WTC11 (cell line): ENCODE measurements at regions of chr2 and their contacts with region 1.

Region 1: DNA sequence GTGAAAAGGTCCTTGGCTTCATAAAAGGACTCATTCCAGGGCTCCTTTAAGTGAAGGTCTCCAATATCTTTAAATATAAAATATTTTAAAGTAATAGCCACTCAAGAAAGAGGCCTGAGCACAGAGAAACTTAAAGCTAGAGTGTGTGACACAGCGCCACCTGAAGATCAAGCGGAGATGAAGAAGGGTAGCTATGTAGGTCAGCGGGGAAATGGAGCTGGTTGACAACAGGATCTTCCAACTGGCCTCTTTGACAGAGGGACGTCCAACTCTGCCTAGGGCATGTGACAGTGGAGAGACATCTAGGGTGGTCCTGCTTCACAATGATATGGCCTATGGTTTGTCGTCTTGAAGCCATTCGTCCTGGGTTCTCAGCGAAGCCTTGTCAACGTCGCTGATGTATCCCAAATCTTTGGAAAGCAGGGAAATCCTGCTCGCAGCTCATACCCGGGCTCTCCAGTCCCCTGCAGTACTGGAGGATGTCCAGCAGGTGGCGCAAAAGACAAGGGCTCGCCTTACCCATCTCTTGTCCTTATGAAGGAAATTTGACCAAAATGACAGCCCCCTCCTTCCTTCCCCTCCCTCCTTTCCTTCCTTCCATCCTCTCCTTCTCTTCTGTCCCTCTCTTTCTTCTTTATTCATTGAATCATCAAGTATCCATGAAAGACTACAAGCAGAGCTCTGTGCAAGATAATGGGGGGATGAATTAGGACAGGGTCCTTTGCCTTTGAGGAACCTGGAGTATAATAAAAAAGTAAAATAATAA is 59.6 kb downstream of the LONRF2 start:
- DNase-seq: peak; percentile 84
- ATAC-seq: peak; percentile 74
- H3K4me3 Mint-ChIP-seq: peak overlapping the region; percentile 51
- H3K27ac Mint-ChIP-seq: no peak overlapping the region
- H3K4me1 Mint-ChIP-seq: peaks cover 12% of the 10 kb centered on the region
- H3K27me3 Mint-ChIP-seq: no peaks in the 10 kb centered on the region
- CTCF ChIP-seq: peak; percentile 99

Region 2: GRCh38 chr2:99559075-99559662 is 703.6 kb before region 1 on chr2:
- CTCF ChIA-PET with region 1: interaction called, 28 read pairs
- POLR2A ChIA-PET with region 1: no interaction called
- DNase-seq: peak; percentile 92
- ATAC-seq: peak; percentile 77
- H3K4me3 Mint-ChIP-seq: no peak overlapping the region
- H3K27ac Mint-ChIP-seq: peak overlapping the region; percentile 57
- H3K4me1 Mint-ChIP-seq: peaks cover 21% of the 10 kb centered on the region
- H3K27me3 Mint-ChIP-seq: no peaks in the 10 kb centered on the region
- CTCF ChIP-seq: peak; percentile 99

Region 3: DNA sequence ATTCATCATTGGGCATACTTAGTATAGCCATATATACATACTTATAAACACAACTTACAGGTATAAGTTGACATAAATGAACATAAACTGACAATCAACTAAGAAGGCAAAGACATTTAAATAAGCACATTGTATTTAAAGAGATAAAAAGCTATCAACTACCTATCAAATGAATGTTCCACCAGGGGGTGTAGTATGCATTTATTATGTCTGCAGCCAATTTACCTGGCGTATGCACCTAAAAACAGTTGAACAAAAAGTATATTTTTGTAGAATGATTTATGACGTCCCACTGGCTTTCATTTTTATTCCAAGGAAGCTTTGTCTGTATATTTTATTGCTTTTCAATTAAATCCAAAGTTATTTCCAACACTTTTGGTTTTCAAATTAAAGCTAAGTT is 443.9 kb before region 1 on chr2:
- CTCF ChIA-PET with region 1: interaction called, 10 read pairs
- POLR2A ChIA-PET with region 1: no interaction called
- DNase-seq: no peak
- ATAC-seq: no peak
- H3K4me3 Mint-ChIP-seq: no peak overlapping the region
- H3K27ac Mint-ChIP-seq: no peak overlapping the region
- H3K4me1 Mint-ChIP-seq: peaks cover 16% of the 10 kb centered on the region
- H3K27me3 Mint-ChIP-seq: no peaks in the 10 kb centered on the region
- CTCF ChIP-seq: no peak

Region 4: GRCh38 chr2:100006516-100006915 is 256.2 kb before region 1 on chr2:
- CTCF ChIA-PET with region 1: no interaction called
- POLR2A ChIA-PET with region 1: no interaction called
- DNase-seq: no peak
- ATAC-seq: no peak
- H3K4me3 Mint-ChIP-seq: no peak overlapping the region
- H3K27ac Mint-ChIP-seq: no peak overlapping the region
- H3K4me1 Mint-ChIP-seq: 0 out of 2 replicates have a peak, but pooled peaks cover 4% of the 10 kb centered on the region
- H3K27me3 Mint-ChIP-seq: no peaks in the 10 kb centered on the region
- CTCF ChIP-seq: no peak

Region 5: DNA sequence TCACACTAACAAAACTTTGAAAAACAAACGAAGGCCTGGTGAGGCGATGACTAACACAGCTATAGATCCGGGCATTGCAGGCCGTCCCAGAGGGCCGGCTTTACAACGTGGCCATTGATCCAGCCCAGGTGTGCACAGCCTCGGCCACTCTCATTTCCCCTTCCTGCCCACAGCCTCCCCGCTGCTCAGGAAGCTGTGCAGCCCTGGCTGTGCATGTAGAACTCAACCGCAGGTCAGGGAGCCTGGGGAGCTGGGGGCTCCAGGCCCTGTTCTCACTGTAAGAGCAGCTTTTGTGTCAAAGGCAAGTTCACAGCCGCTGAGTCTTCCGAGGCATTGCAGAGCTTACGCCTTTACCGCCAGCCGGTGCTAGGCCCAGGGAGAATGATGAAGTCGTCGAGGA is 27.6 kb before region 1 on chr2:
- CTCF ChIA-PET with region 1: interaction called, 25 read pairs
- POLR2A ChIA-PET with region 1: no interaction called
- DNase-seq: peak; percentile 25
- ATAC-seq: peak; percentile 61
- H3K4me3 Mint-ChIP-seq: no peak overlapping the region
- H3K27ac Mint-ChIP-seq: peak overlapping the region; percentile 42; the same call in 1 of the 2 replicates
- H3K4me1 Mint-ChIP-seq: peaks cover 37% of the 10 kb centered on the region
- H3K27me3 Mint-ChIP-seq: no peaks in the 10 kb centered on the region; the same call in 1 of the 2 replicates
- CTCF ChIP-seq: no peak

Region 6: GRCh38 chr2:100281521-100282438 is 19.0 kb after region 1 on chr2:
- CTCF ChIA-PET with region 1: interaction called, 67 read pairs
- POLR2A ChIA-PET with region 1: no interaction called
- DNase-seq: no peak
- ATAC-seq: no peak
- H3K4me3 Mint-ChIP-seq: peak overlapping the region; percentile 10
- H3K27ac Mint-ChIP-seq: no peak overlapping the region
- H3K4me1 Mint-ChIP-seq: peaks cover 48% of the 10 kb centered on the region
- H3K27me3 Mint-ChIP-seq: no peaks in the 10 kb centered on the region
- CTCF ChIP-seq: no peak

Region 7: GRCh38 chr2:100365434-100365833 is 102.7 kb after region 1 on chr2:
- CTCF ChIA-PET with region 1: interaction called, 17 read pairs
- POLR2A ChIA-PET with region 1: no interaction called
- DNase-seq: no peak
- ATAC-seq: no peak
- H3K4me3 Mint-ChIP-seq: no peak overlapping the region
- H3K27ac Mint-ChIP-seq: no peak overlapping the region
- H3K4me1 Mint-ChIP-seq: peaks cover 16% of the 10 kb centered on the region
- H3K27me3 Mint-ChIP-seq: peaks cover 11% of the 10 kb centered on the region; the same call in 1 of the 2 replicates
- CTCF ChIP-seq: no peak

Region 8: DNA sequence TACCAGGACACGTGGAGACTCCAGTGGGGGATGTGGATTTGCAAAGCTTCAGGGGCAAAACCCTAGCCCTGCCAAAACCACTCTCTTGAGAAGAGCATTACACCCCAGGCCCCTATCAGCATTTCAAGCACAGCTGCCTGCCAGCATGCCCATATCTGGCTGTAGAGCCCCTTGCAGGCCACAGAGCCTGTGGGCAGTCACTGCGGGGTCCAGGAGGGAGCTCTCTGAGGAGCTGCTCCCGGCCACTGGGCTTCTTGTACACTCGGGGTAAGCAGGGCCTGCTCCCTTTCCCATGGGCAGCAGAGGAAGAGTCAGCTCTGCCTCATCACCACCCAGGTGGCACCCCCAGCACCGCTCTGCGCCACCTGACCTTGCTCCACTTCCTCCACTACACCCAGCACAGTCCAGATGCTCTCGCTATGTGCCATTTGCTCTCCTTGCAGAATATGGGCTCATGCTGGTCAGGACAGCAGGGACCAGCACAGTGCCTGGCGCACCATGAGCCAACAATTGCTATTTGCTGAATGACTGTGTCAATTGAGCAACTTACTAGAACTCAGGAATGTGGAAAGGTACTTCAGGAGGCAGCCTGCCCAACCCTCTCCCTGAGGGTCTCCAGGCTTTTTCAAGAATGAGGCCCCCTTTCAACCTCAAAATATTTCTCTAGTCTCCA is 147.4 kb after region 1 on chr2:
- CTCF ChIA-PET with region 1: interaction called, 29 read pairs
- POLR2A ChIA-PET with region 1: no interaction called
- DNase-seq: no peak
- ATAC-seq: no peak
- H3K4me3 Mint-ChIP-seq: no peak overlapping the region
- H3K27ac Mint-ChIP-seq: peak overlapping the region; percentile 80; the same call in 1 of the 2 replicates
- H3K4me1 Mint-ChIP-seq: peaks cover 71% of the 10 kb centered on the region
- H3K27me3 Mint-ChIP-seq: no peaks in the 10 kb centered on the region
- CTCF ChIP-seq: no peak